Common myeloid progenitor, CD34-positive (primary cell): ENCODE measurements at regions of chr6 and their contacts with region 1.

Region 1: DNA sequence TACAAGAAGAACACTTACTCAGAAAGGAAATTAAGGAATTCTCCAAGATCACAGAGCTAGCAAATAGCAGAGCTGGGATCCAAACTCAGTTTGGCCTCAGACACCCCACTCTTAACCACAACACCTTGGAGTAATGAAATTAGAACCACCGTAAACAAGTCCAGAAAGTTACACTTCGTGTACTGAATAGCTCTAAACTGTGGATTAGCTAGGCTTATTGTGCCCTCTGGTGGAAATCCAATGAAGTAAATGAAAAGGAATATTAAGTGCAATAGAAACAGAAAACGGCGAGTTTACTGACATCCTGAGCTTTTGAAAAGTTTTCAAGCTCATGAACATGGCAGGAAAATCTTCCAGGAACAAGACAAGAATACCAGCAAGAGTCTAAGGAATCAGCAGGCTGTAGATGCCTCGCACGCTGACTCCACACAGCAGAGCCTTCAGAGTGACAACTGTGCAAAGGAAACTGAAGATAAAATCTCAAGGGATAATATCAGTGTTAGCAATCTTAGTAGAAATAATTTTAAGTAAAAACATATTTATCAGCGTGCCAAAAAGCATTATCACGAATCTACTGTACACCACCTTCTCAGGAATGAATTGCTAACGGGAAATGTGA is 34.6 kb downstream of the FBXO5 start:
- DNase-seq: peak; percentile 47 to 70 (median 60)
- H3K4me3 ChIP-seq: peak overlapping the region in 3 of 7 experiments; percentile 16 to 63 (median 16)
- H3K27ac ChIP-seq: no peak overlapping the region
- H3K4me1 ChIP-seq: peaks cover 0 to 6% (median under 1%) of the 10 kb centered on the region in 4 experiments
- H3K27me3 ChIP-seq: peaks cover 0 to 6% (median 0%) of the 10 kb centered on the region in 5 experiments

Region 2: DNA sequence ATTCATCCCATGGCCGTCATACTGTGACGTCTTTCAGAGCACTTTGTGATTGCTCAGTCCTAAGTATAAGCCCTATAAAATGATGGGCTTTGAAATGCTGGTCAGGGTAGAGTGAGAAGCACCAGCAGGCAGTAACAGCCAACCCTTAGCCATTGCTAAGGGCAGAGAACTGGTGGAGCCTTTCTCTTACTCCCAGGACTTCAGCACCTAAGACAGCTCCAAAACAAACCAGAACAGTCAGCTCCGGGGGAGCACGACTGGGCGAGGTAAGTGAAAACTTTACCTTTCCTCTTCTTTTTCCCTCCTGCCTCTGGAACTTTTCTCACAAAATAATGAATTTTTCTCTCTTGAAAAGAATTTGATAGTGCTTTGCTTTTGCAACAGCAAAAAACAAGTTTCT is 197.6 kb before region 1 on chr6 and contains the start of gene VIP:
- CTCF ChIA-PET with region 1: interaction called, 14 read pairs
- POLR2A ChIA-PET with region 1: no interaction called
- DNase-seq: peak; percentile 29 to 53 (median 51)
- H3K4me3 ChIP-seq: no peak within 1 kb of the TSS
- H3K27ac ChIP-seq: no peak within 1 kb of the TSS
- H3K4me1 ChIP-seq: no peaks in the 10 kb centered on the region
- H3K27me3 ChIP-seq: no peaks in the 10 kb centered on the region